Activated B cell treated with CpG ODN at 0.5 μM for 24 hours (primary cell): ENCODE measurements at regions of chr6 and their contacts with region 1.

Region 1: GRCh38 chr6:27295301-27296081 is 16.6 kb downstream of the POM121L2 start:
- DNase-seq: no peak
- ATAC-seq: no peak
- H3K4me3 Mint-ChIP-seq: no peak overlapping the region
- H3K27ac Mint-ChIP-seq: no peak overlapping the region
- H3K4me1 Mint-ChIP-seq: no peaks in the 10 kb centered on the region
- H3K27me3 Mint-ChIP-seq: peaks cover 75% of the 10 kb centered on the region
- CTCF ChIP-seq: no peak

Region 2: GRCh38 chr6:26322645-26323482 is 972.6 kb before region 1 on chr6:
- CTCF ChIA-PET with region 1: no interaction called
- POLR2A ChIA-PET with region 1: no interaction called
- intact Hi-C with region 1: loop called (anchors 10 kb)
- DNase-seq: no peak
- ATAC-seq: peak; percentile 56
- H3K4me3 Mint-ChIP-seq: peak overlapping the region; percentile 89
- H3K27ac Mint-ChIP-seq: peak overlapping the region; percentile 85
- H3K4me1 Mint-ChIP-seq: peaks cover 25% of the 10 kb centered on the region
- H3K27me3 Mint-ChIP-seq: peaks cover 14% of the 10 kb centered on the region
- CTCF ChIP-seq: no peak

Region 3: DNA sequence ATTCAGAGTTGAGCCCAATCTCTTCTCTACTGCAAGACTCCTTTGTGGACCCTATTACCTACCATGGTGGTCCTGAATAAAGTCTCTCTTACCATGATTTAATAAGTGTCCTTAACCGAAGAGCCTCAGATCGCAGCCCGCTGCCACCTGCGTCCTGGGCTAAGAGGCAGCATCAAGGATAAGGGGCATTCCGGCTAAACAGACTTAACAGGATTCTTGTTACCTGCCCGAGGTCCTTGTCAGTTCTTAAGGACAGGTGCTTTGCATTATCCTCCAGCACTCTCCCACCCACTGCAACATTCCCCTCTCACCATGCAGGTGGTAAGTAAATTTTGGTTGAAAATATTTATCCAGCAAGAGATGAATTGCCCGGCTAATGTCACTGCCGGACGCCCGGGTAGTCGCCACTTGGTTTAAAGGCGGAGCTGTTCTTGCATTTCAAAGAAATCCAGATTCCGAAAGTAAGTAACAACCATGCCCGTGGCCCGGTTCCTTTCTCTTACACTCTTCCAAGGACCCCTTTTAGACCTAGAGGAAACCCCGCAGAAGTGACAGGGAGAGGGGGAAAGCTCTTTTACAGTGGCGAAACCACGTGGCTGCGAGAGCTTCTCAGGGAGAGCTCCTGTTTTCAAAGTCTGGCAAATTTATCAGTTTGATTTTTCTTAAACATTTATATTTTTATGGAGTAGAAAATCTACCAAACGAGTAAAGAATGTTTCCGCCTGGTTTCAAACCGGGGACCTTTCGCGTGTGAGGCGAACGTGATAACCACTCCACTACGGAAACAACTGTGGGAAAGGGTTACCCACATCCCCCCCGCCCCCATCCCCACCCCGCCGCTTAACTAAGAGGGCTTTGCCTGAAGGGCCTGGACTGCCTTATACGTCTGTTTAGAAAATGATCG is 89.9 kb before region 1 on chr6:
- CTCF ChIA-PET with region 1: no interaction called
- POLR2A ChIA-PET with region 1: no interaction called
- intact Hi-C with region 1: no loop called
- DNase-seq: no peak
- ATAC-seq: no peak
- H3K4me3 Mint-ChIP-seq: no peak overlapping the region
- H3K27ac Mint-ChIP-seq: no peak overlapping the region
- H3K4me1 Mint-ChIP-seq: peaks cover 15% of the 10 kb centered on the region
- H3K27me3 Mint-ChIP-seq: peaks cover 38% of the 10 kb centered on the region
- CTCF ChIP-seq: no peak

Region 4: DNA sequence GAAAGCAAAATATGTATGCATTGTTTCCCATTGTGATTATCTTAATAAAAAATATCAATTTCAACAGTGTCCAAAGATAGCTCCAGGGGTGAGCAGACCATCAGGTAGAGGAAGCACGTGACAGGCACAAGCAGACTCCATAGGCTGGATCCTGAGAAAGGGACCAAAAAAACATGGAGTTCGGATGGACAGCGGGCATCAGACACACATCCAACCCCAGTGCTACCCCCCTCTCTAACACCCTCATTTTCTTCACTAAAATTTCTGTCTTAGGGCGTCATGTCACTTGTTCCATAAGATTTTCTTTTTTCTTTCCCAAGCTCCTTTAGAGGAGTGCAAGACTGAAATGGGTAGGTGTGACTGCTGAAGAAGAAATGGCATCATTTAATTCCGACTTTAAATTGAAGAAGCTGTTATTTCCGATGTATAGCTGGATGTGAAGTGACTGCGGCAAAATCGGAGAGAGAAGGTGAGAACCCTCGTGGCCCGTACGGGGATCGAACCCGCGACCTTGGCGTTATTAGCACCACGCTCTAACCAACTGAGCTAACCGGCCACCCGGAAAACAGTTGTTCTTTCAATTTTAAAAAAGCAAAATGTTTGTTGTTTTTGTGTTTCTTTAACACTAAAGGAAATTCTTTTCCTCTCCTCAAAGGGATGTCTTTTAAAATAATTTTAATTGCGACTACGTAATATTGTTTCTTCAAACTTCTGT is 58.2 kb before region 1 on chr6:
- CTCF ChIA-PET with region 1: no interaction called
- POLR2A ChIA-PET with region 1: no interaction called
- intact Hi-C with region 1: loop called (anchors 5 kb)
- DNase-seq: no peak
- ATAC-seq: no peak
- H3K4me3 Mint-ChIP-seq: peak overlapping the region; percentile 7
- H3K27ac Mint-ChIP-seq: peak overlapping the region; percentile 3
- H3K4me1 Mint-ChIP-seq: peaks cover 13% of the 10 kb centered on the region
- H3K27me3 Mint-ChIP-seq: peaks cover 62% of the 10 kb centered on the region
- CTCF ChIP-seq: no peak

Region 5: GRCh38 chr6:27280064-27280539 is 15.4 kb before region 1 on chr6:
- CTCF ChIA-PET with region 1: no interaction called
- POLR2A ChIA-PET with region 1: no interaction called
- intact Hi-C with region 1: no loop called
- DNase-seq: no peak
- ATAC-seq: no peak
- H3K4me3 Mint-ChIP-seq: no peak overlapping the region
- H3K27ac Mint-ChIP-seq: no peak overlapping the region
- H3K4me1 Mint-ChIP-seq: peaks cover 5% of the 10 kb centered on the region
- H3K27me3 Mint-ChIP-seq: peaks cover 56% of the 10 kb centered on the region
- CTCF ChIP-seq: no peak

Region 6: DNA sequence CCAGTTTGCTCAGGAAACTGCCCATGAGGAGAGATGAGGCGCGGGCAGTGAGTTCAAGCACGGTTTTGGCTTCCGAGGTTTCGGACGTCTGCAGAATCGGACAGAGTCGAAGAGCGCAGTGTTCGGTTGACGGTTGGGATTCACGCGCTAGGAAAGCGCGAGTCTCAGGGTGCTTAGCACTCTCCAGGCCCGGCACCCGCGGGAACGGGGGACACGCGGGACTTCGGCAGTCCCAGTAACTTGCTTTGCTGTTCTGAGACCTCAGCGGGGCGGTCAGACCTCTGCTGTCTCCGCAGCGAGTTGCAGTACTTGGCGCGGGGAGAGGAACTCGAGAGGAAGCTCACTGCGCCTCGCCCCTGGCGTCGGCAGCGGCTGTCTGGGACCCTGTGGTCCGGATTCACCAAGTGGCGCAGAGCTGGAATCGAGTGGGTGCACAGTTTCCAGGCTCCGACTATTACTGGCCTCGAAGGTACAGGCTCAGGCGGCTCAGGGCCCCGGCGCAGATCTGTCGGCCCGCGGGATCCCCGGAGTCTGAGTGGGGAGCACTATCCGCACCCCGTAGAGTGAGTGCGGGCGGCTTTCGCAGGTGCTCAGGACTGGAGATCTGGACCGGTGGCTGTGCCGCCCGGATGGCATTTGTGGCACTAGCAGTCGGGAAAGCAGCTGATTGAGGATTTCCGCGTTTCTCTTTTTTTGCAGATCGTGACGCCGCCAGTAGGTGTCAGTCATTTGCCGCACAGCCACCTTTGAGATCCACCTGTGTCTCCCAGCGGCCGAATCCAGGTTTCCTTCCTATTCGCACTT is 16.9 kb after region 1 on chr6 and contains the start of gene POM121L2:
- CTCF ChIA-PET with region 1: no interaction called
- POLR2A ChIA-PET with region 1: no interaction called
- intact Hi-C with region 1: no loop called
- DNase-seq: peak; percentile 53
- ATAC-seq: peak; percentile 71
- H3K4me3 Mint-ChIP-seq: peak within 1 kb of the TSS; percentile 82
- H3K27ac Mint-ChIP-seq: no peak within 1 kb of the TSS
- H3K4me1 Mint-ChIP-seq: peaks cover 12% of the 10 kb centered on the region
- H3K27me3 Mint-ChIP-seq: peaks cover 66% of the 10 kb centered on the region
- CTCF ChIP-seq: no peak
- total RNA-seq, gene POM121L2: not detected in 2 replicates

Region 7: DNA sequence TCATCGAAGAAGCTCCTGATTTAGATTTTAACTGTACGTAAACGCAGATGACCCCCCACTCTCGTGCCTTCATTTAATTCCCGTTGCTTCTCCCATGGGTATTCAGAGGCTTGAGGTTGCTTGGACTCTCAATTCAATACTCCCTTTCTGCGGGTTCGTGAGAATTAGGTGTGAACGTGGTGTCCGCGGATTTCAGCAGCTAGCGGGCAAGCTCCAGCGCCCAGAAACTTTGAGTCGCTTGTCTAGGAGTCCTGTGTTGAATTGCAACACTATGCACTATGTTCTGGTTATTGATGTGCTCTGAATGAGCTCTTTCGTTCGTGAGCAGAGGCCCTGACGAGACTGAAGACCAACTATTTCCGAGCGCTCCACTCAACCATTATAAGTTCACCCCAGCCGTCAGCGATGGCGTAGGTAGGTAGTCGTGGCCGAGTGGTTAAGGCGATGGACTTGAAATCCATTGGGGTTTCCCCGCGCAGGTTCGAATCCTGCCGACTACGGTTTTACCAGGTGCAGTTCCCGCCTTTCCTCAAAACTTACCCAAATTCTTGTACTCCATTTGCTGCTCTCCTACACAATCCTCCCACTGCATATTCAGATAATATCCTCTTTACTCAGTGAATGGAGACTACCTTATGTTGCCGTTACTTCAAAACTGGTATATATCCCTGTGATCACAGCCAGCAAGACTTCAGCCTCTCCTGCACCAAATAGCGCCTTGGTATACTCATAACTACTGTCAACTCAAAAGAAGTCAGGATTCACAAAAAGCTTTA is 250.0 kb after region 1 on chr6:
- CTCF ChIA-PET with region 1: no interaction called
- POLR2A ChIA-PET with region 1: no interaction called
- intact Hi-C with region 1: loop called (anchors 10 kb)
- DNase-seq: no peak
- ATAC-seq: no peak
- H3K4me3 Mint-ChIP-seq: peak overlapping the region; percentile 6
- H3K27ac Mint-ChIP-seq: no peak overlapping the region
- H3K4me1 Mint-ChIP-seq: peaks cover 12% of the 10 kb centered on the region
- H3K27me3 Mint-ChIP-seq: peaks cover 80% of the 10 kb centered on the region
- CTCF ChIP-seq: no peak